ENCODE measurements at regions of chr1 and their contacts with region 1.

Region 1: DNA sequence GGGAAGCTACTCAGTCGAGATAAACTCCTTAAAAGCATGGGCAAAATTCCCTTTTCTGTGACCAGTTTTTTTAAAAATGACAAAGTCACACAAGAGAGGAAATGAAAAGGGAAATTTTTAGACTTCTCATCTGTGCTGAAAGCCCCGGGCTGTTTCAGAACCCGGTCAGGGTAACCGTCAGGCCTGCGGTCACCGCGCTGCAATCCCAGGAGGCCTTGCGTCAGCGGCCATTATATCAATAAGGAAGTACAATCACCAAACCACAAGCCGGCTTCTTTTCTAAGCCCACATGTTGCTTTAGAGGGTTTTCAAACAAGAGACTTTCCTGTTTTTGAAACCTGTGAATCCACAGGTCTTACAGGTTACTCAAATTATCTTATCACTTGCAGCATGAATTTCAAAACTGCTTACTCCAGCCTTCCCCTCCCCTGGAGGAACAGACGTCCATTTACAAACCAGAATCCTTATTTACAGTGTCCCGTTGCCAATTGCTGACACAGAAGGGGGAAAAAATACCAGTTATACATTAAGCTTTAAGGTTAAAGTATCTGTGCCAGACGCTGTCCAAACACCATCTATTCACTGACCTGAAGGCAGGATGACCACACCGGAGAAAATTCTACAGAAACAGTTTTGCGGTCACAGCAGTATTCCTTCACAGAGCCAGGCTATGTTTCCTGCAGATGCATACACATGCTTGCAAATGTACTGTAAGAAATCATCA is 165.3 kb downstream of the TOMM20 start:
- DNase-seq: peak; percentile 76 to 84
- ATAC-seq: peak in 7 of 8 donors; percentile 56 to 81 (median 67)
- H3K4me3 ChIP-seq: peak overlapping the region in 1 of 10 donors; percentile 5
- H3K27ac ChIP-seq: peak overlapping the region; percentile 36 to 96 (median 76)
- H3K4me1 ChIP-seq: peaks cover 20 to 71% (median 54%) of the 10 kb centered on the region in 9 donors
- H3K27me3 ChIP-seq: no peaks in the 10 kb centered on the region
- CTCF ChIP-seq: no peak

Region 2: DNA sequence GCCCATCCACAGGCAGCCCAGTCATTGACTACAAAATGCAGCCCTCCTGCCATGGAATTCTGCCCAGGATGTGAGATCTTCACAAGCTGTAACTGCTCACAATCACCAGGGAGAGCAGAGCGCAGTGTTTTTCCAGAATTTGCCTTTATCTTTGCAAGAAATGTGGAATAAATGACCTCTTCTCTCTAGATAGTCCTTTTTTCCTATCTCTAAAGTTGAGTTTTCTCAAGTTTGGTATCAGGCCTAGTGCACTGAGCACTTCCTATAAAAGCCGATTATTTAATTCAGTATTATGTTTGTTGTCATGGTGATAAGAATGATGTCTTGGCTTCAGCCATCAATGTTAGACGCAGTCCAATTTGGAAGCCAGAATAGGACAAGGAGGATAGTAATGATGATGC is 106.5 kb before region 1 on chr1:
- intact Hi-C with region 1: loop called in 1 of 10 experiments (anchors 5 kb)
- DNase-seq: peak in 1 of 2 donors; percentile 60
- ATAC-seq: peak in 7 of 8 donors; percentile 79 to 86 (median 81)
- H3K4me3 ChIP-seq: no peak overlapping the region
- H3K27ac ChIP-seq: peak overlapping the region; percentile 2 to 81 (median 56)
- H3K4me1 ChIP-seq: peaks cover 0 to 19% (median 3%) of the 10 kb centered on the region in 9 donors
- H3K27me3 ChIP-seq: no peaks in the 10 kb centered on the region
- CTCF ChIP-seq: no peak

Region 3: DNA sequence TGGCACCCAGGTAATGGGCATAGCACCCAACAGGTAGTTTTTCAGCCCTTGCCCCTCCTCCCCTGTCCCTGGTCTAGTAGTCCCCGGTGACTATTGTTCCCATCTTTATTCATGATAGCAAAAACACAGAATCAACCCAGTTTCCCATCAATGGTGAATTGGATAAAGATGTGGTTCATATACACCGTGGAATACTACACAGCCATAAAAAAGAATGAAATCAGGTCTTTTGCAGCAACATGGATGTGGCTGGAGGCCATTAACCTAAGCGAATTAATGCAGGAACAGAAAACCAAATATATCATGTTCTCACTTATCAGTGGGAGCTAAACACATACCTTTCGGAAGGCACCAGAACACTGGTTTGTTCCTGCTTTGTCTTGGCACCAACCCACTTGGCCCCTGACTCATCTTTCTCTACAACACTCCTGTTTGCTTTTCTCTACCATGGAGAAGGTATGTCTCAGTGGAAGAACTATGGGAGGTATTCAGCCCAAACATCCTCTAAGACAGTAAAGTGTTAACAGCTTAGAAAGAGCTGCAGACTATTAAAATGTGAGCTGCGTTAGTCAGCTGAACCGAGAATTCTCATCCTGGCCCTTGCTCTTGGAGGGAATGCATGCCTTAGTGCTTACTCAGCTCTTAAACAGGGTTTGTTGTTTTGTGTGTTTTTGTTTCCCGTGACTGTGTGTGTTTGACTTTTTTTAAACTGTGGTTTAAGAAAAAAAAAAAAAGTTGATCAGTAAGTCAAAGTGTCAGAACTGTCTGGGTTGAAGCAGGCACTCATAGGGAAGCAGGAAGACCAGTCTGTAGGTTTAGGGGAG is 37.7 kb before region 1 on chr1:
- intact Hi-C with region 1: loop called in 6 of 10 experiments (anchors 5 kb)
- DNase-seq: no peak
- ATAC-seq: peak in 7 of 8 donors; percentile 34 to 69 (median 65)
- H3K4me3 ChIP-seq: no peak overlapping the region
- H3K27ac ChIP-seq: peak overlapping the region in 9 of 10 donors; percentile 33 to 75 (median 59)
- H3K4me1 ChIP-seq: peaks cover 10 to 64% (median 45%) of the 10 kb centered on the region in 9 donors
- H3K27me3 ChIP-seq: no peaks in the 10 kb centered on the region
- CTCF ChIP-seq: no peak